ENCODE measurements at regions of chr4 and their contacts with region 1.

Region 1: GRCh38 chr4:84258905-84259830 is 239.9 kb downstream of the NKX6-1 start:
- DNase-seq: peak; percentile 37
- ATAC-seq: peak; percentile 95
- H3K4me3 ChIP-seq: no peak overlapping the region
- H3K27ac ChIP-seq: no peak overlapping the region
- H3K4me1 ChIP-seq: peaks cover 3% of the 10 kb centered on the region; the same call in 1 of the 2 replicates
- H3K27me3 ChIP-seq: no peaks in the 10 kb centered on the region
- CTCF ChIP-seq: peak; percentile 51 to 71 (median 62); a peak in 5 of 6 replicates
- EP300 ChIP-seq: no peak
- POLR2A ChIP-seq: no peak
- RAD21 ChIP-seq: peak; percentile 70

Region 2: GRCh38 chr4:83503974-83504373 is 755.2 kb before region 1 on chr4:
- CTCF ChIA-PET with region 1: no interaction called
- POLR2A ChIA-PET with region 1: no interaction called
- RAD21 ChIA-PET with region 1: no interaction called
- SMC1A ChIA-PET with region 1: no interaction called
- in situ Hi-C with region 1: no loop called
- intact Hi-C with region 1: loop called (anchors 10 kb)
- DNase-seq: no peak
- ATAC-seq: no peak
- H3K4me3 ChIP-seq: no peak overlapping the region
- H3K27ac ChIP-seq: no peak overlapping the region
- H3K4me1 ChIP-seq: no peaks in the 10 kb centered on the region
- H3K27me3 ChIP-seq: no peaks in the 10 kb centered on the region
- CTCF ChIP-seq: no peak
- EP300 ChIP-seq: no peak
- POLR2A ChIP-seq: no peak
- RAD21 ChIP-seq: no peak

Region 3: GRCh38 chr4:83771113-83771705 is 488.0 kb before region 1 on chr4:
- CTCF ChIA-PET with region 1: interaction called, 3 read pairs
- POLR2A ChIA-PET with region 1: no interaction called
- RAD21 ChIA-PET with region 1: no interaction called
- SMC1A ChIA-PET with region 1: no interaction called
- in situ Hi-C with region 1: no loop called
- intact Hi-C with region 1: loop called (anchors 5 kb)
- DNase-seq: no peak
- ATAC-seq: peak; percentile 73
- H3K4me3 ChIP-seq: no peak overlapping the region
- H3K27ac ChIP-seq: no peak overlapping the region
- H3K4me1 ChIP-seq: no peaks in the 10 kb centered on the region
- H3K27me3 ChIP-seq: no peaks in the 10 kb centered on the region
- CTCF ChIP-seq: peak; percentile 42 to 55 (median 48); a peak in 5 of 6 replicates
- EP300 ChIP-seq: no peak
- POLR2A ChIP-seq: no peak
- RAD21 ChIP-seq: peak; percentile 55

Region 4: DNA sequence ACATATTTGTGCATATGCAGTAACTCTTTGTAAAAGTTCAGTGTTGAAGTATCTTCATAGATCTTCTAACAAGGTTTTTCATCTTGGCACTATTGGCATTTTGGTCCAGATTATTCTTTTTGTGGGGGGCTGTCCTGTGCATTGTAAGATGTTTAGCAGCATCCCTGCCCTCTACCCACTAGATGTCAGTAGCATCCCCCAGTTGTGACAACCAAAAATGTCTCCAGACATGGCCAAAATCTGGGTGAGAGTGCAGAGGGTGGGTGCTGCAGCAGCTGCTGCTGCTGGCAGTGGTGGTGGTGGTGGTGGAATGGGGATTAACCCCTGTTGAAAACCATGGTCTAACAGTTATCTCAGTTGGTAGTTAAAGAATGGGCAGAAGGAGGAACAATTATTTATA is 353.2 kb before region 1 on chr4:
- CTCF ChIA-PET with region 1: no interaction called
- POLR2A ChIA-PET with region 1: no interaction called
- RAD21 ChIA-PET with region 1: no interaction called
- SMC1A ChIA-PET with region 1: no interaction called
- in situ Hi-C with region 1: no loop called
- intact Hi-C with region 1: loop called (anchors 1 kb)
- DNase-seq: no peak
- ATAC-seq: peak; percentile 68
- H3K4me3 ChIP-seq: no peak overlapping the region
- H3K27ac ChIP-seq: no peak overlapping the region
- H3K4me1 ChIP-seq: no peaks in the 10 kb centered on the region
- H3K27me3 ChIP-seq: no peaks in the 10 kb centered on the region
- CTCF ChIP-seq: peak; percentile 22 to 42 (median 40); a peak in 4 of 6 replicates
- EP300 ChIP-seq: no peak
- POLR2A ChIP-seq: no peak
- RAD21 ChIP-seq: peak; percentile 65

Region 5: GRCh38 chr4:84032372-84032771 is 226.8 kb before region 1 on chr4:
- CTCF ChIA-PET with region 1: interaction called, 3 read pairs
- POLR2A ChIA-PET with region 1: no interaction called
- RAD21 ChIA-PET with region 1: no interaction called
- SMC1A ChIA-PET with region 1: no interaction called
- in situ Hi-C with region 1: no loop called
- intact Hi-C with region 1: loop called (anchors 2 kb)
- DNase-seq: peak; percentile 12
- ATAC-seq: peak; percentile 89
- H3K4me3 ChIP-seq: no peak overlapping the region
- H3K27ac ChIP-seq: no peak overlapping the region
- H3K4me1 ChIP-seq: peaks cover 9% of the 10 kb centered on the region; the same call in 1 of the 2 replicates
- H3K27me3 ChIP-seq: no peaks in the 10 kb centered on the region
- CTCF ChIP-seq: no peak
- EP300 ChIP-seq: peak in 1 of 2 experiments; percentile 66; a peak in 2 of 4 replicates
- POLR2A ChIP-seq: no peak
- RAD21 ChIP-seq: no peak

Region 6: GRCh38 chr4:84099599-84099998 is 159.6 kb before region 1 on chr4:
- CTCF ChIA-PET with region 1: no interaction called
- POLR2A ChIA-PET with region 1: no interaction called
- RAD21 ChIA-PET with region 1: no interaction called
- SMC1A ChIA-PET with region 1: no interaction called
- in situ Hi-C with region 1: no loop called
- intact Hi-C with region 1: no loop called
- DNase-seq: no peak
- ATAC-seq: no peak
- H3K4me3 ChIP-seq: no peak overlapping the region
- H3K27ac ChIP-seq: no peak overlapping the region
- H3K4me1 ChIP-seq: no peaks in the 10 kb centered on the region
- H3K27me3 ChIP-seq: no peaks in the 10 kb centered on the region
- CTCF ChIP-seq: no peak
- EP300 ChIP-seq: no peak
- POLR2A ChIP-seq: no peak
- RAD21 ChIP-seq: no peak

Region 7: DNA sequence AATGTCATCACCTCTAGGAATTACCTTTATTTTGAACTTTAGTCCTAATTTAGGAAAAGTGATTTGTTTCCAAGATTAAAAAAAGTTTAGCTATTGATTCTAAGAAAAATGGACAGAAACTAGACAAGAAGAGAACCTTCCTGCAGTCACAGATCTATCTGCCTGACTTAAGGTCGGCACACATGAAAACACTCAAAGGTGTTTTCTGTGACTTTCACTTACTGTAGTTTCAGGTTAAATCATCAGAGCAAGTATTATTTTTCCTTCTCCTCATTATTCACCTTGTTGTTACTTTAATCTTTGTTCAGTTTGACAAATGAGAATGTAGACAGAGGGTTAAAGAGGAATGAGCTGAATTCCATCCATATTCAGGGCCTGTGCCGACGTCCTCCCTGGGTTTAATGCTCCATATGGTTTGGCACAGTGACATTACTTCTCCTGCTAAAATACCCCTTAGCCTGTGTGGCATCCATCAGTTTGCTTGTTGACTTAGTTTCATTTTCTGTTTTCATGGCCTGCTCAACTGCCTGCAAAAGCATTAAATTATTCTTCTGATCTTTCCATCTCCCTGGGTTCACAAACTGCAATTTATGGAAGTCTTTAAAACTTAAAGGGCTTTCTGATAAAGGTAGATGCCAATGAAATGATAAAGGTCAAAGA is 112.7 kb before region 1 on chr4:
- CTCF ChIA-PET with region 1: no interaction called
- POLR2A ChIA-PET with region 1: no interaction called
- RAD21 ChIA-PET with region 1: no interaction called
- SMC1A ChIA-PET with region 1: no interaction called
- in situ Hi-C with region 1: no loop called
- intact Hi-C with region 1: loop called (anchors 5 kb)
- DNase-seq: peak; percentile 5
- ATAC-seq: peak; percentile 87
- H3K4me3 ChIP-seq: no peak overlapping the region
- H3K27ac ChIP-seq: no peak overlapping the region
- H3K4me1 ChIP-seq: no peaks in the 10 kb centered on the region
- H3K27me3 ChIP-seq: no peaks in the 10 kb centered on the region
- CTCF ChIP-seq: no peak
- EP300 ChIP-seq: no peak
- POLR2A ChIP-seq: no peak
- RAD21 ChIP-seq: no peak